Activated B cell treated with CpG ODN at 0.5 μM for 24 hours (primary cell): ENCODE measurements at regions of chr2 and their contacts with region 1.

Region 1: DNA sequence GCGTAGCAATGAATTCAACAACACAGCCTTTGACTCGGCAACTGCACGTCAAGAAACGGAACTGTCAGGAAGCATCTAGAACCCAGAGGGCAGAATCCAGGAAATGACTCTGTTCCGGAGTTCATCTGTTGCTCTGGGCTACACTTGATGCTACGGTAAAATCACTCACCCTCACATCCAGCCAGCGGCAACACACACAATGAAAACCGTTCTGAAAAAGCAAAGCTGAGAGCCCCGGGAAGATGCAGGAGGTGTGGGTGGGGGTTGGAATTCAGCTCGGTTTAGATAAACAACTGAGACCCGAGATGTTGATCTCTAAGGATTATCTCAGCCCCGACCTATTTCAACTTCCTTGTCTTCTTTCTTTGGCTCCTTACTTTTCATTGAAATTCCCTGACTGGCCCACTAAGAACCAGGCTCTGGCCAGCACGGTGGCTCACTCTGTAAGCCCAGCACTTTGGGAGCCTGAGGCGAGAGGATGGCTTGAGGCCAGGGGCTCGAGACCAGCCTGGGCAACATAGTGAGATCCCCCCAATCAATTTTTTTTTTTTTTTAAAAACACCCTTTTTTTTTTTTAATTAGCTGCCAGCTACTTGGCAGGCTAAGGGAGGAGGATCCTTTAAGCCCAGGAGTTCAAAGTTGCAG is 13.3 kb upstream of the RAB17 start:
- DNase-seq: peak; percentile 33
- ATAC-seq: peak; percentile 97
- H3K4me3 Mint-ChIP-seq: peak overlapping the region; percentile 75
- H3K27ac Mint-ChIP-seq: peak overlapping the region; percentile 93
- H3K4me1 Mint-ChIP-seq: peaks cover 27% of the 10 kb centered on the region
- H3K27me3 Mint-ChIP-seq: peaks cover 2% of the 10 kb centered on the region
- CTCF ChIP-seq: no peak

Region 2: GRCh38 chr2:237691908-237692600 is 88.2 kb after region 1 on chr2:
- CTCF ChIA-PET with region 1: interaction called, 3 read pairs
- POLR2A ChIA-PET with region 1: no interaction called
- intact Hi-C with region 1: loop called (anchors 5 kb)
- DNase-seq: peak; percentile 91
- ATAC-seq: peak; percentile 69
- H3K4me3 Mint-ChIP-seq: peak overlapping the region; percentile 84
- H3K27ac Mint-ChIP-seq: peak overlapping the region; percentile 91
- H3K4me1 Mint-ChIP-seq: peaks cover 80% of the 10 kb centered on the region
- H3K27me3 Mint-ChIP-seq: no peaks in the 10 kb centered on the region
- CTCF ChIP-seq: no peak